ENCODE measurements at regions of chr18 and their contacts with region 1.

Region 1: GRCh38 chr18:71899183-71899582 is 645.0 kb downstream of the CBLN2 start:
- H3K4me3 Mint-ChIP-seq: no peak overlapping the region
- H3K27ac Mint-ChIP-seq: no peak overlapping the region
- H3K4me1 Mint-ChIP-seq: no peaks in the 10 kb centered on the region
- H3K27me3 Mint-ChIP-seq: no peaks in the 10 kb centered on the region

Region 2: GRCh38 chr18:71942433-71942832 is 43.2 kb after region 1 on chr18:
- intact Hi-C with region 1: loop called (anchors 5 kb)
- H3K4me3 Mint-ChIP-seq: no peak overlapping the region
- H3K27ac Mint-ChIP-seq: no peak overlapping the region
- H3K4me1 Mint-ChIP-seq: no peaks in the 10 kb centered on the region
- H3K27me3 Mint-ChIP-seq: no peaks in the 10 kb centered on the region

Measured in dendritic cell treated with granulocyte-macrophage colony-stimulating factor and Interleukin-4, amounts not matched to agents 40 ng/mL and 50 ng/mL, for 4 days (primary cell).